Spleen (tissue), 13 donors: ENCODE measurements at regions of chr5 and their contacts with region 1.

Region 1: DNA sequence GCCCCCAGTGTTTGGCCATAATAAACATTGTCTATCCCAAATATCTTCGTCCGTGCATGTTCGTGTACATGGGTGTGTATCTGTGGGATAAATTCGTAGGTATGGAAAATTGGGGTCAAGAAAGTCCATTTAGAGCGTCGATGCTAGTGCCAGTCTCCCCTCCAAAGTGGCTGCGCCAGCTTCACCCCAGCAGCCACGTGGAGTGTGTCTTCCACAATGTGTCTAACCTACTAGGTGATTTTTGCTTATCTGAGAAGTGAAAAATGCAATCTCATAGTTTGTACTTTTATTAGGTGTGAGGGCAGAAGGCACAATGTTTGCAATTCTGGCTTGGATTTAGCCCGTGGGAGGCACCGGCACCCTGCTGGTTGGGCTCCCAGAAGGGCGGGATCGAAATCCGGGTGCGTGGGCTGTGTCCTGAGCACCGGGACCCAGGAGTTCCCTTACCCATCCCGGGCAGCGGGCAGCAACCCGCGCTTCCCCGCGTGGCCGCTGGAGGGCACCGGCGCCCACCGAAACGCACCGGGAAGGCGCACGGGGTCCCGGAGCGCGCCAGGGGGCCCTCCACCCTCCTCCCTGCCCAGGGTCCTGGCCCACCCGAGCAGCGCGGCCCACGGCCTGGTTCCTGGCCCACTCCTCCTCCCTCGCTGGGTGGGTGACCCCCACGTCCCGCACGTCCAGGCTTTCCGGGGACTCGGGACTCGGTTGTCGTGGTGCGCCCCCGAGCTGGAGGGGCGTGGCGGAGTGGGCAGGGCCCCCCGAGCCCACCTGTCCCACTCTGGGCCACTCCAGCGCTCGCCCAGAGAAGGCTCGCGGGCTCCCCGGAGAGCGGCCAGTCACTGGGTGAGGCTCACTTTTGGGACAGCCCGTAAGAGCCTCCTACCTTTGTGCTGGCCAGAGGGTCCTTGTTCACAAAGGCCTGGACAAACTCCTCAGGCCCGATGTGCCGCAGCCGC is 55.4 kb upstream of the RNF130 start:
- DNase-seq: peak; percentile 85
- H3K4me3 ChIP-seq: no peak overlapping the region
- H3K27ac ChIP-seq: no peak overlapping the region
- H3K4me1 ChIP-seq: peaks cover 0 to 7% (median 5%) of the 10 kb centered on the region in 6 donors
- H3K27me3 ChIP-seq: peaks cover 0 to 30% (median 8%) of the 10 kb centered on the region in 7 donors
- CTCF ChIP-seq: peak in 10 of 11 experiments; percentile 48 to 89 (median 75)
- POLR2A ChIP-seq: no peak

Region 2: DNA sequence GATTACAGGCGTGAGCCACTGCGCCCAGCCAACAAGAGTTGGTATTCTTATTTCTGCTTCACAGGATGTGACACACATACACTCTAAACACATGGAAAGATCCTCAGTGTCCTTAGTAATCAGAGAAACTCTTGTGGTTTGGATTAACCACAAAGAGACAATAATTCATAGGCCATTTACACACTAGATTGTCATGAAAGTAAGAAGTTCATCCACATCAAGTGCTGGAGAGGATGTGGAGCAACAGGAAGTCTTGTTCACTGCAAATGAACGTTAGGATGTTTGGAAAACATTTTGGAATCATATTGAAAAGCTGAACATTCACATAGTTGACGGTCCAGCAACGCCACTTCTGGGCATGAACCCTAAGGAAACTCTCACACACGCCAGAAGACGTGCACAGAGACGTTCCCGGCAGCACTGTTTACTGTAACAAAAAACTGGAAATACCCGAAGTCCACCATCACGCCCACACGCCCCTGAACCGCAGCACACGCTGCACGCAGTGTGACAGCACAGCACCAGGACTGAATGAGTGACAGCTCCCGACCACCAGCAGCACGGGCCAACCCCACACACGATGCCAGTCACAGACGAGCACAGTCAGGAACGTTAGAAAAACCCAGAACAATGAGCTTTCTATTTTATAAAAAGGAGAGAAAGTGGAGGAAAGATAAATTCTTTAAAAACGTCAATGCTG is 1624.5 kb before region 1 on chr5:
- intact Hi-C with region 1: no loop called
- DNase-seq: no peak
- H3K4me3 ChIP-seq: no peak overlapping the region
- H3K27ac ChIP-seq: no peak overlapping the region
- H3K4me1 ChIP-seq: no peaks in the 10 kb centered on the region
- H3K27me3 ChIP-seq: no peaks in the 10 kb centered on the region
- CTCF ChIP-seq: no peak
- POLR2A ChIP-seq: no peak

Region 3: DNA sequence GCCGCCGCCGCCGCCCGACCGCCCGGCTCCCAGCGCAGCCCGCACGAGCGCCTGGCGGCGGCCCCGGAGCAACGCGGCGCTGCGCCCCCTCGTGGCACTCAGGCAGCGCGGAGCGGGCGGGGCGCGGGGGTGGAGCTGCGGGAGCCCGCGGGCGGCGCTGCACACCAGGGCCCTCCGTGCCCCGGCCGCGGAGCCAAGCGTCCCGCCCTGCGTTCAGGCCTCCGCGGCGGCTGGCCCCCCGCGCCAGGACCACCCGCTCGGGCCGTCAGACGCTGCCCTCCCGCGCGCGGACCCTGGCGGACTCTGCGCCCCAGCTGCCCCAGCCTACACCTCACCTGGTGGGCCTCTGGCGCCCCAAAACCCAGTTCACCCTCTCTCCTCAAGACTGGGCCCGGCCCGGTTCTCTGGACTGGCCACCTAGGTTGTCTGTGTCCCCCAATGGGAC is 82.2 kb after region 1 on chr5 and contains the start of gene RASGEF1C:
- intact Hi-C with region 1: loop called (anchors 5 kb)
- DNase-seq: peak; percentile 87
- H3K4me3 ChIP-seq: peak within 1 kb of the TSS in 6 of 8 donors; percentile 19 to 68 (median 30)
- H3K27ac ChIP-seq: no peak within 1 kb of the TSS
- H3K4me1 ChIP-seq: peaks cover 3 to 13% (median 7%) of the 10 kb centered on the region in 6 donors
- H3K27me3 ChIP-seq: peaks cover 0 to 74% (median 38%) of the 10 kb centered on the region in 7 donors
- CTCF ChIP-seq: peak in 6 of 11 experiments; percentile 14 to 54 (median 38)
- POLR2A ChIP-seq: no peak
- total RNA-seq, gene RASGEF1C: 0.17 to 1.1 TPM in 2 of 7 donors, not detected in the others

Region 4: DNA sequence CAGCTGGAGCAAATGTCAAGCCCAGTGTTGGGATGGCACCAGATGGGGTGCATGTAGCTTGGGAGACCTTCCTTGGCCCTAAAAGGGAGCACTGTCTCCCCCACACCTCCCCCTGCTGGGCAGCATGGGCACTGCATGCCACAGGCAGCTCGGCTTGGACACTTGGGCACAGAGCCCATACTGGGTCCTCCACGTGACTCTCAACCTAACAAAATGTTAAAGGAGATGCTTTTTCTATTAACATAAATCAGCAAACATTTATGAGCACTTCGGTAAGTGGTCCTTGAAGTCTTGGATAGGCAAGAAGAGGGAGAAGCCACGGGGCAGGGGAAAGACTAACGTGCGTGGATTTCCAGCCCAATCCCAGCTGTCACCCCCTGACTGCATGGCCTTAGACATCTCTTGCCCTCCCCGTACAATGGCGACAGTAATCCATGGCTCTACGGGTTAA is 188.8 kb after region 1 on chr5:
- intact Hi-C with region 1: loop called (anchors 5 kb)
- DNase-seq: peak; percentile 93
- H3K4me3 ChIP-seq: no peak overlapping the region
- H3K27ac ChIP-seq: no peak overlapping the region
- H3K4me1 ChIP-seq: no peaks in the 10 kb centered on the region
- H3K27me3 ChIP-seq: peaks cover 0 to 5% (median 0%) of the 10 kb centered on the region in 7 donors
- CTCF ChIP-seq: peak; percentile 83 to 99 (median 95)
- POLR2A ChIP-seq: no peak